Activated CD8-positive, alpha-beta T cell treated with anti-CD3 and anti-CD28 coated beads, Interleukin-2, amount 10 ng/mL, durations not matched to agents 7 days and 5 days (primary cell): ENCODE measurements at regions of chr11 and their contacts with region 1.

Region 1: GRCh38 chr11:130916238-130916855 is at the start of gene SNX19:
- DNase-seq: peak; percentile 91
- ATAC-seq: peak; percentile 100
- H3K4me3 Mint-ChIP-seq: peak within 1 kb of the TSS; percentile 83
- H3K27ac Mint-ChIP-seq: peak within 1 kb of the TSS; percentile 84
- H3K4me1 Mint-ChIP-seq: peaks cover 28% of the 10 kb centered on the region
- H3K27me3 Mint-ChIP-seq: peaks cover 2% of the 10 kb centered on the region
- total RNA-seq, gene SNX19: 40.7 to 41.0 TPM

Region 2: GRCh38 chr11:130904380-130904779 is 12.0 kb before region 1 on chr11:
- CTCF ChIA-PET with region 1: interaction called, 34 read pairs
- POLR2A ChIA-PET with region 1: interaction called, 4 read pairs
- DNase-seq: no peak
- ATAC-seq: no peak
- H3K4me3 Mint-ChIP-seq: no peak overlapping the region
- H3K27ac Mint-ChIP-seq: no peak overlapping the region
- H3K4me1 Mint-ChIP-seq: no peaks in the 10 kb centered on the region
- H3K27me3 Mint-ChIP-seq: no peaks in the 10 kb centered on the region

Region 3: GRCh38 chr11:130964058-130964792 is 47.9 kb after region 1 on chr11:
- CTCF ChIA-PET with region 1: no interaction called
- POLR2A ChIA-PET with region 1: no interaction called
- DNase-seq: no peak
- ATAC-seq: no peak
- H3K4me3 Mint-ChIP-seq: no peak overlapping the region
- H3K27ac Mint-ChIP-seq: no peak overlapping the region
- H3K4me1 Mint-ChIP-seq: no peaks in the 10 kb centered on the region
- H3K27me3 Mint-ChIP-seq: no peaks in the 10 kb centered on the region